Heart left ventricle (tissue), 16 donors: ENCODE measurements at regions of chr11 and their contacts with region 1.

Region 1: DNA sequence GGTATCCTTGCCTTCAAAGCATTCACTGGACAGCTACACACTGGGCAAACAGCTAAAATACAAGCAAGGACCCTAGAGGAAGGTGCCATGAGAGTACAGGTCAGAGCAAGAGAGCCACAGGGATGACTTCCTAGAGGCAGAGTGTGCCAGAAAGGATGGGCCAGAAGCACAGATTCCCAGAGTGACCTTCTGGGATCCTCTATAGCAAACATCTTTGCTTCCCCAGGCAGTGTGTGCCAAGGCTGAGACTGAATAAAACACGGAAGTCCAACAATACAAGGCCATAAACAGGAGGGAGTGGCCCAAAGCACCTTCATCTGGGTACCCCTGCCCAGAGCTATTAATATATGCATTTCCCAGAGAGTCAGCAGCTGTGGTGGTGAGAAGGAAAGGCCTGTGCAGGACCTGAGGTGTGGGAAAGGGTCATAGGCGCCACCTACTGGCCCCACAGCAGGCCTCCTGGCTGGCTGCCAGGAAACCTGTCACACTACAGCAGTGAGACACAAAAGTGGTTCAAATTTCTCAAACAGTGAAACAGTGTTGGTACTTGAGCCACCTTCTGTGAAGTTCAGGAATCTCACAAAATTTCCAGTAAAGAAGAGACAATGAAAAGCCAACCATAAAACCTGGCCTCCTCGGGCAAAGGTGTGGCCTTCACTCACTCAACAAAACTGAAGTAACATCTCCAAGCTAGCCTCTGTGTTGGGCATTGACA is 20.3 kb downstream of the CLPB start:
- DNase-seq: peak; percentile 79 to 92 (median 82)
- ATAC-seq: peak; percentile 73 to 91 (median 82)
- H3K4me3 ChIP-seq: no peak overlapping the region
- H3K27ac ChIP-seq: peak overlapping the region in 1 of 12 donors; percentile 39
- H3K4me1 ChIP-seq: peaks cover 0 to 47% (median 13%) of the 10 kb centered on the region in 12 donors
- H3K27me3 ChIP-seq: no peaks in the 10 kb centered on the region
- CTCF ChIP-seq: peak; percentile 77 to 94 (median 88)
- POLR2A ChIP-seq: no peak

Region 2: DNA sequence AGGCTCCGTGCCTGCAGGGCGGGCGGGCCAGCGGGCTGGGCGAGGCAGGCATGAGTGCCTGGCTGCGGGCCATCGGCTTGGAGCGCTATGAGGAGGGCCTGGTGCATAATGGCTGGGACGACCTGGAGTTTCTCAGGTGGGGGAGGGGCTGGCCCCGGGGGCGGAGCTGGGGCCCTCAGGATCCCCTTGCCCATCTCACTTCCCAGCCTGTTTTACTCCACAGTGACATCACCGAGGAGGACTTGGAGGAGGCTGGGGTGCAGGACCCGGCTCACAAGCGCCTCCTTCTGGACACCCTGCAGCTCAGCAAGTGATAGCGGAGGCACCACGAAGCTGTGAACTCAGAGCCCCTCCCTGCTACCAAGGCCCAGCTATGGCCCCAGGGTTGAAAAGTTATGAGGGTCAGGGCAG is 176.0 kb before region 1 on chr11:
- intact Hi-C with region 1: loop called in 1 of 10 experiments (anchors 10 kb)
- DNase-seq: peak in 2 of 5 donors; percentile 52 to 58
- ATAC-seq: peak; percentile 30 to 53 (median 48)
- H3K4me3 ChIP-seq: no peak overlapping the region
- H3K27ac ChIP-seq: peak overlapping the region in 1 of 12 donors; percentile 78
- H3K4me1 ChIP-seq: peaks cover 0 to 41% (median 31%) of the 10 kb centered on the region in 12 donors
- H3K27me3 ChIP-seq: peaks cover 5 to 39% (median 24%) of the 10 kb centered on the region in 9 donors
- CTCF ChIP-seq: peak; percentile 43 to 75 (median 62)
- POLR2A ChIP-seq: no peak

Region 3: DNA sequence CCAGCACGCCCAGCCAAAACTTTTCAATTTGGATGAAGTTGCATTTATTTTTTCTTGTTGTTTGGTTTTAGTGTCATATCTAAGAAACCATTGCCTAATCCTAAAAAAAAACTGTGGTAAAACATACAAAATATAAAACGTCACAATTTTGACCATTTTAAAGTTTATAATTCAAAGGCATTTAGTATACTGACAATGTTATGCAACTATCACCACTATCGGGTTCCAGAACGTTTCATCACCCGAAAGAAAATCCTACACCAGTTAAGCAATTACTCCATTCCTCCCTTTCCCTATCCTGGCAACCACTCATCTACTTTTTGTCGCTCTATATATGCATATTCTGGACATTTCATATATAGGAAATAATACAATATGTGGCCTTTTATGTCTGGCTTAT is 139.6 kb before region 1 on chr11:
- intact Hi-C with region 1: no loop called
- DNase-seq: no peak
- ATAC-seq: no peak
- H3K4me3 ChIP-seq: no peak overlapping the region
- H3K27ac ChIP-seq: no peak overlapping the region
- H3K4me1 ChIP-seq: peaks cover 0 to 7% (median 0%) of the 10 kb centered on the region in 12 donors
- H3K27me3 ChIP-seq: peaks cover 0 to 9% (median 0%) of the 10 kb centered on the region in 9 donors
- CTCF ChIP-seq: no peak
- POLR2A ChIP-seq: no peak

Region 4: GRCh38 chr11:72308226-72309073 is 105.6 kb before region 1 on chr11:
- intact Hi-C with region 1: loop called in 1 of 10 experiments (anchors 5 kb)
- DNase-seq: no peak
- ATAC-seq: no peak
- H3K4me3 ChIP-seq: no peak overlapping the region
- H3K27ac ChIP-seq: no peak overlapping the region
- H3K4me1 ChIP-seq: peaks cover 0 to 6% (median 0%) of the 10 kb centered on the region in 12 donors
- H3K27me3 ChIP-seq: no peaks in the 10 kb centered on the region
- CTCF ChIP-seq: no peak
- POLR2A ChIP-seq: no peak

Region 5: GRCh38 chr11:72354356-72355115 is 59.5 kb before region 1 on chr11:
- intact Hi-C with region 1: loop called in 1 of 10 experiments (anchors 5 kb)
- DNase-seq: no peak
- ATAC-seq: no peak
- H3K4me3 ChIP-seq: no peak overlapping the region
- H3K27ac ChIP-seq: no peak overlapping the region
- H3K4me1 ChIP-seq: peaks cover 0 to 15% (median 7%) of the 10 kb centered on the region in 12 donors
- H3K27me3 ChIP-seq: no peaks in the 10 kb centered on the region
- CTCF ChIP-seq: no peak
- POLR2A ChIP-seq: no peak

Region 6: GRCh38 chr11:72585762-72586311 is 171.8 kb after region 1 on chr11:
- intact Hi-C with region 1: no loop called
- DNase-seq: peak; percentile 52 to 76 (median 59)
- ATAC-seq: peak; percentile 55 to 72 (median 66)
- H3K4me3 ChIP-seq: no peak overlapping the region
- H3K27ac ChIP-seq: no peak overlapping the region
- H3K4me1 ChIP-seq: peaks cover 0 to 34% (median 11%) of the 10 kb centered on the region in 12 donors
- H3K27me3 ChIP-seq: peaks cover 0 to 53% (median 29%) of the 10 kb centered on the region in 9 donors
- CTCF ChIP-seq: peak; percentile 90 to 96 (median 95)
- POLR2A ChIP-seq: no peak

Region 7: GRCh38 chr11:73113394-73113793 is 699.3 kb after region 1 on chr11:
- intact Hi-C with region 1: no loop called
- DNase-seq: no peak
- ATAC-seq: no peak
- H3K4me3 ChIP-seq: no peak overlapping the region
- H3K27ac ChIP-seq: no peak overlapping the region
- H3K4me1 ChIP-seq: peaks cover 0 to 23% (median 0%) of the 10 kb centered on the region in 12 donors
- H3K27me3 ChIP-seq: no peaks in the 10 kb centered on the region
- CTCF ChIP-seq: no peak
- POLR2A ChIP-seq: no peak